CD4-positive, alpha-beta memory T cell (primary cell): ENCODE measurements at regions of chr10 and their contacts with region 1.

Region 1: DNA sequence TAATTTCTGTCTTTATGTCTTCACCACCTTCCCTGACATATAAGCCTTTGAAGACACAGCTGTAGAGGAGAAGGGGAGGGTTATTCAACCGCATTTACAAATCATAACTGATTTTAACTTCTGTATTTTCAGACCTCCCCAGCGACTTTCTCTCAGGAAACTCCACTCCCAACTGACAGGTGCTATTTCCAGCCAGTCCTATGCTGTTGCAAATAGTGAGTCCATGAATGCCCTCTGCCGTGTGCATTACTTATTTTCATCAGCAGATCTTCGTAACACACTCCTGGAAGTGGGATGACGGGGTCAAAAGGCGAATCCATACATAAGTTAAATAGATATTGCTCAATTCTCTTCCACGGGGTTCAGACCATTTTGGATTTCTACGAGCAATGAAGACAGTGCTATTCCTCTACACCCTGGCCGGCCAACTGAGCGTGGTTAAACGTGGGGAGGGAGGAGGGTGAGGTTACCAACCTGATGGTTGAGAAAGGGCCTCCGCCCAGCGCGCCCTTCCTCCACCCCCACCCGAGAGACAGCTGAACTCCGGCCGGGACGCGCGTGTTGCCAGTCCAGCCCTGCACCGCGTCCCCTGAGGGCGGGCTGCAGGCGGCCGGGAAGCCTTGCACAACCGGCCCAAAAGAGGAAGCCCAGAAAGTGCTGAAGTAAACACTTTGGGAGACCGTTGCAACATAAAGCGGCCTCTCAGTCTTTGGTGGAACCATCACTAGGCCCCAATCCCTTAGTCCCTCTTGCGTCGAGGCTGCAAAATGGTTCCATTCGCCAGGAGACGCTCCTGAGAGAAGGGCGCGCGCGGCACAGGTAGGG is at the start of gene APBB1IP:
- DNase-seq: peak; percentile 39 to 59 (median 43)
- H3K4me3 ChIP-seq: peak within 1 kb of the TSS; percentile 94
- H3K4me3 Mint-ChIP-seq: peak within 1 kb of the TSS; percentile 94 to 98 (median 96)
- H3K27ac ChIP-seq: peak within 1 kb of the TSS; percentile 89
- H3K27ac Mint-ChIP-seq: peak within 1 kb of the TSS; percentile 92 to 98 (median 96)
- H3K4me1 ChIP-seq: peaks cover 52% of the 10 kb centered on the region
- H3K4me1 Mint-ChIP-seq: peaks cover 39 to 71% (median 55%) of the 10 kb centered on the region in 4 donors
- H3K27me3 ChIP-seq: no peaks in the 10 kb centered on the region
- H3K27me3 Mint-ChIP-seq: no peaks in the 10 kb centered on the region
- total RNA-seq, gene APBB1IP: 106 TPM

Region 2: DNA sequence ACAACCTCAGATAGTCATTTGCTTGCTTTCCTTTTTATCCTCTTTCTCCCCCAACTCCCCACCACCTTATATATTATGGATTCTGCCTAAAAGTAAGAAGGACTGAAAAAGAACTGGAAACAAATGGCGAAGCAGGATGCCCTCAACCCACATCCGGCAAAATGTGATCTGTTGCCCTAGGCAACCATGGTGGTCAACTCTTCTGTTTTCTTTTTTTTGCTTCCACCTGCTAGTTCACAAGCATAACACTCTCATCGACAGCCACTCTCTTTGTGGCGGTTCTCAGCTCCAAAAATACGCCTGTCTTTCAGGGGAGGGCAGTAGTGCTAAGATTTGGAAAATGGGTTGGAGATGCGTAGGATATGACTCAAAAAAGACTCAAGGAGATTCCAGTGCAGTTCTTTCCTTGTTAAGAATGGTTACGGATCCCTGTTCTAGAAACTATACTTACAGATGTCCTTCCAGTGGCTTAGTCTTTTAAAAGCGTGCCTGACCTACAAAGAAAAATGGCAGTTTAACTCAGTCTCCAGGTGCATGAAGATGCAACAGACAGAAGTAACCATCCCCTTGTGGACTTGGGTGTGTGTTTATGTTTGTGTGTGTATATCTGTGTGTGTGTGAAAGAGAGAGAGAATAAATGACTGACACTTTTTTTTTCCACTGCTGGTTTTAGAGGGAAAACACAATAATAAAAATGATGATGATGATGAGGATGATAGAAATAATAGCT is 11.0 kb after region 1 on chr10:
- CTCF ChIA-PET with region 1: interaction called, 9 read pairs
- POLR2A ChIA-PET with region 1: interaction called, 82 read pairs
- intact Hi-C with region 1: loop called (anchors 1 kb)
- DNase-seq: peak; percentile 87 to 91 (median 89)
- H3K4me3 ChIP-seq: peak overlapping the region; percentile 31 to 37
- H3K4me3 Mint-ChIP-seq: peak overlapping the region; percentile 76 to 89 (median 84)
- H3K27ac ChIP-seq: peak overlapping the region; percentile 68
- H3K27ac Mint-ChIP-seq: peak overlapping the region; percentile 92 to 99 (median 98)
- H3K4me1 ChIP-seq: peaks cover 95% of the 10 kb centered on the region
- H3K4me1 Mint-ChIP-seq: peaks cover 77 to 93% (median 85%) of the 10 kb centered on the region in 4 donors
- H3K27me3 ChIP-seq: no peaks in the 10 kb centered on the region
- H3K27me3 Mint-ChIP-seq: no peaks in the 10 kb centered on the region

Region 3: DNA sequence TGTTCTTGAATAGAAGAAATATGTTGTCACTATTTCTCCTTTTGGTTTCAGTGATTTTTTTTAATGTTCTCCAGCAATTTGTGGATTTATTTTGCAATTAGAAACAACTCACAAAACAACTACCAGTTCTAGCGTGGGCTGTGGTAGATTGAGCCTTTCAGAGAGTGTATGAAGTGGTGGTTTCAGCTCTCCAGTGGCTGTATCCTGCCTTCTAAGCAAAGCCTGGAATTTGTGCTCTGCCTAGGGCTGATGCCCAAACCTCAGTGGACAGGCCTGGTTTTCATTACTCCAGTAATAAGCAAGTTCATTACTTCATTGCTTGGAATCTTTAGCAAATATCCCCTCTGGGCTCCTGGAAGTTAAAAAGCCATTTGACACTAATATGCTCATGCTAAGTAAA is 36.2 kb after region 1 on chr10:
- CTCF ChIA-PET with region 1: interaction called, 11 read pairs
- POLR2A ChIA-PET with region 1: interaction called, 45 read pairs
- intact Hi-C with region 1: loop called (anchors 2 kb)
- DNase-seq: no peak
- H3K4me3 ChIP-seq: no peak overlapping the region
- H3K4me3 Mint-ChIP-seq: peak overlapping the region in 5 of 8 donors; percentile 49 to 83 (median 73)
- H3K27ac ChIP-seq: peak overlapping the region; percentile 57
- H3K27ac Mint-ChIP-seq: peak overlapping the region; percentile 83 to 99 (median 96)
- H3K4me1 ChIP-seq: peaks cover 98% of the 10 kb centered on the region
- H3K4me1 Mint-ChIP-seq: peaks cover 60 to 90% (median 75%) of the 10 kb centered on the region in 4 donors
- H3K27me3 ChIP-seq: no peaks in the 10 kb centered on the region
- H3K27me3 Mint-ChIP-seq: no peaks in the 10 kb centered on the region

Region 4: DNA sequence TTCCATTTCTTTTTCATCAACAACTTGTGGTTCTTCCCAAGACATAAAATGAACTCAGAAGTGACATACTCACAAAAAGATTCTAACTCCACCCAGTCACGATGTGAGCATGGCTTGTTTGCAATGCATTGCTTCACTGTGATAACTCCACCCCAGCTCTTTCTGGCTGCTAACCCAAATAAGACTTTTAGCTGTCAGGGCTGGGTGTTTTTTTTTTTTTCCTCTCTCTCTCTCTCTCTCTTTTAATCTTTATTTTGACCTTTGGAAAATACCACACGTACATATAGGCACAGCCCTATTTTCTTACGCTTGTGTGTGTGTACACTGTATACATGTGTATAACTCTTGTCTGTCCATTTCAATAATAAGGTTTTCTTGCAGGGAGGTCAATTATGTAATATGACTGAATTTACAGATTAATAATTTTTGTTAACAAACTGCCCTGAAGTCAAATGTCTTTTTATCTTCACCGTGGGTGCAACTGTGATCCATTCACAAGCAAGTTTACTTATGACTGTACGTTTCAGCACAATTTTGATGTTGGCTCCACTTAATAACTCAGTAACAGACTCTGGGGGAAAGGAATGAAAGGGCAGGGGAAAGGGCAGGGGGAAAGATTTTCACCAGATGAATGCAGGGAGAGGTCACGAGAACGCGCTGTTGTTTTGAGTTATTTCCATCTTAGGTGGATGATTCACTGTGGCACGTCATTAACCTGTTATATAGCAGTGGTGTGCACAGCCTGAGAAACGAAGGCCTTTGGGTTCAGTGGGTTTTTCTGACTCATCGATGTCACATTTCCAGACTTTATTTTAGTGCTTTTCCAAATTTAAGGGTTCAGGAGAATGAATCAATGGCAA is 49.4 kb after region 1 on chr10:
- CTCF ChIA-PET with region 1: no interaction called
- POLR2A ChIA-PET with region 1: interaction called, 167 read pairs
- intact Hi-C with region 1: loop called (anchors 1 kb)
- DNase-seq: peak; percentile 58 to 91 (median 70)
- H3K4me3 ChIP-seq: peak overlapping the region in 1 of 2 donors; percentile 49
- H3K4me3 Mint-ChIP-seq: peak overlapping the region; percentile 55 to 77 (median 68)
- H3K27ac ChIP-seq: peak overlapping the region; percentile 73
- H3K27ac Mint-ChIP-seq: peak overlapping the region; percentile 94 to 97 (median 95)
- H3K4me1 ChIP-seq: peaks cover 76% of the 10 kb centered on the region
- H3K4me1 Mint-ChIP-seq: peaks cover 53 to 67% (median 58%) of the 10 kb centered on the region in 4 donors
- H3K27me3 ChIP-seq: no peaks in the 10 kb centered on the region
- H3K27me3 Mint-ChIP-seq: no peaks in the 10 kb centered on the region

Region 5: DNA sequence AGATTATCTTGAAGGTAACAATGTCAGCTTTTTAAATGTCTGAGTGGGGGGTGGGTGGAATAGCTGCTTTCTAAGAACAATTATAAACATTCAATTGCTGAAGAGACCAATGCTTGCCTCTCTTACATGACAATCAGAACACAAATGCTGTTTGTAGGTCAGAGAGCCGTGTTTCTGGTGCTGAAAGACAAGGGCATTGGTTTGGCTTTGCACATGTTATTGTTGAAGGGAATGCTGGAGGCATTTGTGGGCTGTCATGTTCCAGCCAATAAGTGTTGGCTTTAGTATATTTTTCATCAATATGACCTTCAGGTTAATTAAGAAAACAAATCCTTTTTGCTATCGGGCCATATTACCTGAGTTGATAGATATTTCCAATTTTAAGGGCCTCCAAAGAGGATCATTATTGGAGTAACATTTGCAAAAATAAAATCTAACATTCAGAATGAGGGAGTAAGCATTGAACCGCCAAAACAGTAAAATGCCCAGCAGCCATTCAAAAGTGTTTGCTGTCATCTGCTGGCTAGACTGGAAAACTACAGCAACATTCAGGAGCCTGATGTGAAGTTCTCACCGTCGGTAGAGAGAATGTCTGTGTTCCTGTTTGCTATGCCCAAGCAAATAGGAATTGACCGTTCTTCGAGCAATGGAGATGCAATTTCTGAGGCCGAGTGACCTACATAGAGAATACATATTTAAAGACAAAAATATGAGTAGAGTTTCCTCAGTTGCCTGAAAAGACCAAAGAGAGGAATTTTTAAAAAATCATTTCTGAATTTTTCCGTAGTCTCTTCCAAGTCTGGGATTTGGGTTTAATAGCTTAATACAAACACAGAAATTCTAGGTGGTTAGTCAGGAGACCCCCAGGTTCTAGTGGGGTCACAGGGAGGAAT is 119.1 kb after region 1 on chr10:
- CTCF ChIA-PET with region 1: interaction called, 7 read pairs
- POLR2A ChIA-PET with region 1: interaction called, 7 read pairs
- intact Hi-C with region 1: loop called (anchors 2 kb)
- DNase-seq: peak in 4 of 5 donors; percentile 39 to 44 (median 44)
- H3K4me3 ChIP-seq: no peak overlapping the region
- H3K4me3 Mint-ChIP-seq: no peak overlapping the region
- H3K27ac ChIP-seq: no peak overlapping the region
- H3K27ac Mint-ChIP-seq: peak overlapping the region in 4 of 7 donors; percentile 8 to 46 (median 31)
- H3K4me1 ChIP-seq: no peaks in the 10 kb centered on the region
- H3K4me1 Mint-ChIP-seq: peaks cover 0 to 21% (median 8%) of the 10 kb centered on the region in 4 donors
- H3K27me3 ChIP-seq: no peaks in the 10 kb centered on the region
- H3K27me3 Mint-ChIP-seq: no peaks in the 10 kb centered on the region